A549 (cell line): ENCODE measurements at regions of chr4 and their contacts with region 1.

Region 1: DNA sequence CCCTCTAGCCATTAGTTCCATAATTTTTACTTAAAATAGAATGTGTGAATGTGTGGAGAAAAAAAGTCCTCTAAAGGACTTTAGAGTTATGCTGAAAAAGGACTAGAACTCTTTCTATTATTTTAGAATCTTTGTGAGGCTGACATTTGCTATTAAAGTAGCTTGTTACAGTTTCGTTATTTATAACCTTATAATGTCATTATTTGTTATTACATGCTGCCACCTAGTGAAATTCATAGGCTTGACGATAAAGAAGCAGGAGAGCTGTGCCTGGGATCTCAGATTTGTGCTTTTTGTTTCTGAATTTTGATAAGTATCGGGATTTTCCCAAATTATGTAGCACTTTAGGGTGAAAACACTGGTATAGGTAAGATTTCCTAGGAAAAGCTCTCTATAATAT is 38.5 kb upstream of the TAPT1 start:
- DNase-seq: peak; percentile 15 to 30
- ATAC-seq: peak in 1 of 2 experiments; percentile 78; a peak in 3 of 6 replicates
- H3K4me3 ChIP-seq: no peak overlapping the region
- H3K27ac ChIP-seq: no peak overlapping the region
- H3K4me1 ChIP-seq: no peaks in the 10 kb centered on the region
- CTCF ChIP-seq: peak; percentile 57
- EP300 ChIP-seq: no peak
- POLR2A ChIP-seq: no peak
- RAD21 ChIP-seq: peak; percentile 72 to 77

Region 2: GRCh38 chr4:16026160-16026761 is 238.5 kb before region 1 on chr4:
- CTCF ChIA-PET with region 1: interaction called, 24 read pairs
- POLR2A ChIA-PET with region 1: no interaction called
- DNase-seq: peak; percentile 21 to 56
- ATAC-seq: peak in 1 of 2 experiments; percentile 50; a peak in 1 of 6 replicates
- H3K4me3 ChIP-seq: no peak overlapping the region
- H3K27ac ChIP-seq: no peak overlapping the region
- H3K4me1 ChIP-seq: peaks cover 17% of the 10 kb centered on the region; the same call in 2 of the 3 replicates
- CTCF ChIP-seq: peak; percentile 80
- EP300 ChIP-seq: no peak
- POLR2A ChIP-seq: no peak
- RAD21 ChIP-seq: peak; percentile 83 to 84

Region 3: GRCh38 chr4:16196478-16197393 is 68.1 kb before region 1 on chr4:
- CTCF ChIA-PET with region 1: interaction called, 22 read pairs
- POLR2A ChIA-PET with region 1: no interaction called
- DNase-seq: peak; percentile 8 to 54
- ATAC-seq: peak; percentile 85 to 90
- H3K4me3 ChIP-seq: 0 out of 3 replicates have a peak overlapping the region, but pooled peaks have one; percentile 27
- H3K27ac ChIP-seq: peak overlapping the region; percentile 39 to 69; a peak in 3 of 6 replicates
- H3K4me1 ChIP-seq: peaks cover 12% of the 10 kb centered on the region; the same call in 2 of the 3 replicates
- CTCF ChIP-seq: peak; percentile 46
- EP300 ChIP-seq: no peak
- POLR2A ChIP-seq: no peak
- RAD21 ChIP-seq: peak; percentile 38 to 47; a peak in 3 of 5 replicates

Region 4: GRCh38 chr4:16250665-16251365 is 14.0 kb before region 1 on chr4:
- CTCF ChIA-PET with region 1: interaction called, 10 read pairs
- POLR2A ChIA-PET with region 1: no interaction called
- DNase-seq: peak; percentile 38 to 65
- ATAC-seq: peak; percentile 91 to 93
- H3K4me3 ChIP-seq: no peak overlapping the region
- H3K27ac ChIP-seq: peak overlapping the region; percentile 81 to 88
- H3K4me1 ChIP-seq: peaks cover 51% of the 10 kb centered on the region
- CTCF ChIP-seq: no peak
- EP300 ChIP-seq: peak; percentile 50 to 72; a peak in 3 of 5 replicates
- POLR2A ChIP-seq: no peak
- RAD21 ChIP-seq: no peak

Region 5: DNA sequence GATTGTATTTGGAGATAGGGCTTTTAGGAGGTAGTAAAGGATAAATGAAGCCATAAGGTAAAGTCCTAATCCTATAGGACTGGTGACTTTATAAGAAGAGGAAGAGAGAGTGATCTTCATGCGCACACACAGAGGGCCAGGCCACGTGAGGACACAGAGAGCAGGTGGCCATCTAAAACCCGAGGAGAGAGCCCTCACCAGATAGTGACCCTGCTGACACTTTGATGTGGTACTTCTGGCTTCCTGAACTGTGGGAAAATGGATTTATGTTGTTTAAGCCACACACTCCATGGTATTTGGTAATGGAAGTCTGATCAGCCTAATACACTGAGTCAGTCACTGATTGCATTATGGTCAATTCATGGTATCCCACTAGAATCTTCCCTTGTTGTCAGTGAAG is 126.4 kb after region 1 on chr4:
- CTCF ChIA-PET with region 1: no interaction called
- POLR2A ChIA-PET with region 1: no interaction called
- DNase-seq: no peak
- ATAC-seq: no peak
- H3K4me3 ChIP-seq: no peak overlapping the region
- H3K27ac ChIP-seq: no peak overlapping the region
- H3K4me1 ChIP-seq: no peaks in the 10 kb centered on the region
- CTCF ChIP-seq: no peak
- EP300 ChIP-seq: no peak
- POLR2A ChIP-seq: no peak
- RAD21 ChIP-seq: no peak